T-cell (primary cell): ENCODE measurements at regions of chr3 and their contacts with region 1.

Region 1: GRCh38 chr3:63975723-63976122 is 47.6 kb downstream of the PSMD6 start:
- DNase-seq: no peak
- ATAC-seq: no peak
- H3K4me3 ChIP-seq: no peak overlapping the region
- H3K4me3 Mint-ChIP-seq: peak overlapping the region in 2 of 3 donors; percentile 0 to 88
- H3K27ac ChIP-seq: no peak overlapping the region
- H3K27ac Mint-ChIP-seq: peak overlapping the region; percentile 88 to 96
- H3K4me1 ChIP-seq: peaks cover 61 to 75% of the 10 kb centered on the region in 2 experiments
- H3K4me1 Mint-ChIP-seq: peaks cover 95 to 98% (median 98%) of the 10 kb centered on the region in 3 donors
- H3K27me3 ChIP-seq: no peaks in the 10 kb centered on the region
- H3K27me3 Mint-ChIP-seq: no peaks in the 10 kb centered on the region

Region 2: DNA sequence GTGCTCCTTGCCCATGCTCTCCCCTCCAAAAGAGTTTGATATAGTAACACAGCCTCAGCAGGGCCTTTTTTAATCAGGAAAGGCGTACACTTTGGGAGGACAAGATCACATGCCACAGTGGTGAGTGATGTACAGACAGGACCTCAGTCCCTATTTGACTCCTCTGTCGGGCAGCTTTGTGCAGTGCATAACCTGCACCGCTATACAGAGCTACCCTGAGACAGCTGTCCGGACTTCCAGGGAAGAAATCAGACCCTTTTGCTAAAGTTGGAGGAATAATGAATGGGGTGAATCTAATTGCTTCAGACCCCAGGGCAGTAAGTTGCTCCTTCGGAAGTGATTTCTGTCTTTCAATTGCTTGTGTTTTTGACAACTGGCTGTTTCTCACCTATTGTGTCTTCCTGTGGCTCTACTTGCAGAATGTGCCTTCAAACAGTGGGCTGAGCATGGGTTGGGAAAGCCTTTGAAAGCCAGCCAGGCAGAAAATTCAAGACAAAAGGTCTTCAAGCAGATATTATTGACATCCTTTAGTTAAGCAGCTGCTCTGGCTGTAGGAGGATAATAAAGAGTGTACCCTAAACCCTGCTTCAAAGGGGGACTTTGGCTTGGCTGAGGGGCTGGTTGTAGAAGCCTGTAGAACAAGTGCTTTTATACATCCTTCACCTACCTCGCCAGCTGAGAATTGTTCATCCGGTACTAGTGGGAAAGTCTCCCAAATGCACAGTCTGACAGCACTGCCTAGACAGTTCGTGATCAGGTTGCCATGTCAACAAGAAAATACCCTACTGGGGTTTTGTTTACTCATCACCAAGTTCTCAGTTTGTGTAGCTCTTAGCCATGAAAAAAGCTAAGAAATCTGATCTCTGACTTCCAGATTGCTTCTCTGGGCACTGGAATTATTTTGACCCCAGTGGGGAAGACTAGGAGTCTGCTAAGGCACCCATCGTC is 288.2 kb before region 1 on chr3:
- CTCF ChIA-PET with region 1: no interaction called
- POLR2A ChIA-PET with region 1: no interaction called
- DNase-seq: no peak
- ATAC-seq: no peak
- H3K4me3 ChIP-seq: no peak overlapping the region
- H3K4me3 Mint-ChIP-seq: no peak overlapping the region
- H3K27ac ChIP-seq: no peak overlapping the region
- H3K27ac Mint-ChIP-seq: no peak overlapping the region
- H3K4me1 ChIP-seq: no peaks in the 10 kb centered on the region
- H3K4me1 Mint-ChIP-seq: no peaks in the 10 kb centered on the region
- H3K27me3 ChIP-seq: no peaks in the 10 kb centered on the region
- H3K27me3 Mint-ChIP-seq: peaks cover 4 to 12% of the 10 kb centered on the region in 2 donors

Region 3: GRCh38 chr3:63863148-63864007 is 112.3 kb before region 1 on chr3 and contains the starts of genes ATXN7 and THOC7:
- CTCF ChIA-PET with region 1: no interaction called
- POLR2A ChIA-PET with region 1: interaction called in 1 of 2 experiments, 22 read pairs
- DNase-seq: peak; percentile 42 to 86 (median 64)
- ATAC-seq: peak; percentile 84 to 89 (median 86)
- H3K4me3 ChIP-seq: peak within 1 kb of the TSS; percentile 91 to 93
- H3K4me3 Mint-ChIP-seq: peak within 1 kb of the TSS; percentile 85 to 91 (median 90)
- H3K27ac ChIP-seq: peak within 1 kb of the TSS; percentile 68
- H3K27ac Mint-ChIP-seq: peak within 1 kb of the TSS; percentile 88 to 93
- H3K4me1 ChIP-seq: peaks cover 9 to 14% of the 10 kb centered on the region in 2 experiments
- H3K4me1 Mint-ChIP-seq: peaks cover 70 to 74% (median 72%) of the 10 kb centered on the region in 3 donors
- H3K27me3 ChIP-seq: no peaks in the 10 kb centered on the region
- H3K27me3 Mint-ChIP-seq: no peaks in the 10 kb centered on the region
- total RNA-seq, gene ATXN7: 110 to 231 (median 123) TPM
- total RNA-seq, gene THOC7: 30.9 to 36.9 (median 33.1) TPM

Region 4: DNA sequence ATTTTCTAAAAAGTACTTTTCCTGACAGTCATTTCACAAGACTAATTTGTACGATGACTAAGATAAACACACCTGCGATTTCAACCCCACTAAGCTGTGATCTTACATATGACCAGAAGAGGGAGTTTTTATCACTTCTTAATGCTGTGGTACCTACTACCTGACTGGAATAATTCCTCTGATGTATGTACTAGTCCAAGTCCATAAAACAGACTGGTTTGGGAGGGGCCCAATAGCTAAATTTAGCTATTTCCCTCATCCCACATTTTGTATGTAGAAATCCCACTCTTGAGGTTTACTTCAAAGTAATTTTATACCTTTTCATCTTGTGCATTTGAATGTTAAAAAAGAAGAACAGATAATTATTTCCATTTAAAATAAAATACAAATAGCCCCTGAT is 13.8 kb before region 1 on chr3:
- CTCF ChIA-PET with region 1: interaction called, 54 to 220 read pairs
- POLR2A ChIA-PET with region 1: interaction called, 27 to 119 read pairs
- DNase-seq: peak in 2 of 35 experiments; percentile 23 to 77
- ATAC-seq: peak; percentile 91 to 97 (median 92)
- H3K4me3 ChIP-seq: no peak overlapping the region
- H3K4me3 Mint-ChIP-seq: no peak overlapping the region
- H3K27ac ChIP-seq: no peak overlapping the region
- H3K27ac Mint-ChIP-seq: no peak overlapping the region
- H3K4me1 ChIP-seq: peaks cover 10 to 17% of the 10 kb centered on the region in 2 experiments
- H3K4me1 Mint-ChIP-seq: peaks cover 30 to 58% (median 56%) of the 10 kb centered on the region in 3 donors
- H3K27me3 ChIP-seq: no peaks in the 10 kb centered on the region
- H3K27me3 Mint-ChIP-seq: no peaks in the 10 kb centered on the region

Region 5: GRCh38 chr3:63993653-63994079 is 17.9 kb after region 1 on chr3:
- CTCF ChIA-PET with region 1: interaction called, 56 to 78 read pairs
- POLR2A ChIA-PET with region 1: interaction called, 5 to 12 read pairs
- DNase-seq: peak; percentile 22 to 75 (median 49)
- ATAC-seq: peak; percentile 80 to 86 (median 82)
- H3K4me3 ChIP-seq: no peak overlapping the region
- H3K4me3 Mint-ChIP-seq: no peak overlapping the region
- H3K27ac ChIP-seq: no peak overlapping the region
- H3K27ac Mint-ChIP-seq: peak overlapping the region; percentile 70 to 74
- H3K4me1 ChIP-seq: peaks cover 0 to 19% of the 10 kb centered on the region in 2 experiments
- H3K4me1 Mint-ChIP-seq: peaks cover 47 to 61% (median 54%) of the 10 kb centered on the region in 3 donors
- H3K27me3 ChIP-seq: no peaks in the 10 kb centered on the region
- H3K27me3 Mint-ChIP-seq: no peaks in the 10 kb centered on the region

Region 6: DNA sequence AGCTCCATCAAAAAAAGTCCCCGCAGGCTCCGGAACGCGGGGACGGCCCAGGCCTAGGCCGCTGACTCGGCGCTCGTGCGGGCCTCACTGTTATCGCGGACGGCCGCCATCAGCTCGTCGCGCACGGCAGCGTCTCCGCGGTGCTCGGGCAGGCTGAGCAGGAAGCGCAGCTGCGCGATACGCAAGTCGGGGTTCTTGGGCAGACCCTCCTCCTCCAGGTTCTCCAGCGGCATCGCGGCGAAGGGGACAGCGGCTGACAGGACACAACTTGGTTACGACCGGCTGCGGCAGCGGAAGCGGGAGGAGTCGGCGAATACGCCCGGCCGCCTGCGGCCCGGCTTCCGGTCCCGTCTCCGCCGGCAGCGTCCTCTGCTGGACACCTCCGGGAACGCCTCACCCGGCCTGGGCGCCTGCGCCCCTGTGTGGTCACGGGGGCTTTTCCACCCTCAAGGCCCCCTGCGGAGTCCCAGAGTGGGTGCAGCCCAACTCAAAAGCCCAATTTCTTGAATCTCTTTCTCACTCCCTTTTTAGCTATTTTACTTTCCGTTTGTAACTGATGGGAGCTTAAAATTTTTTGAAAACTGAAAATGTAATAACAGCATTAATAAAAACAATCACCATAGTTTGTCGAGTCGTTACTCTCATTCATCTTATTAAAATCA is 47.6 kb after region 1 on chr3 and contains the start of gene PSMD6:
- CTCF ChIA-PET with region 1: interaction called, 3 to 16 read pairs
- POLR2A ChIA-PET with region 1: interaction called, 3 read pairs
- DNase-seq: peak; percentile 77 to 97 (median 88)
- ATAC-seq: peak; percentile 93 to 97 (median 96)
- H3K4me3 ChIP-seq: peak within 1 kb of the TSS; percentile 75 to 85
- H3K4me3 Mint-ChIP-seq: peak within 1 kb of the TSS; percentile 88
- H3K27ac ChIP-seq: peak within 1 kb of the TSS; percentile 69
- H3K27ac Mint-ChIP-seq: peak within 1 kb of the TSS; percentile 87 to 93
- H3K4me1 ChIP-seq: peaks cover 10 to 26% of the 10 kb centered on the region in 2 experiments
- H3K4me1 Mint-ChIP-seq: peaks cover 34 to 39% (median 38%) of the 10 kb centered on the region in 3 donors
- H3K27me3 ChIP-seq: no peaks in the 10 kb centered on the region
- H3K27me3 Mint-ChIP-seq: peaks cover 13 to 16% of the 10 kb centered on the region in 2 donors
- total RNA-seq, gene PSMD6: 60.2 to 95.4 (median 73.2) TPM